Activated T-helper 1 cell treated with anti-CD3 and anti-CD28 coated beads, Interleukin-12 subunit alpha, Interleukin-12 subunit beta, Interleukin-2, Interleukin-4 antibody, amounts not matched to agents 30 ng/mL and 10 ng/mL and 1 ng/mL, durations not matched to agents 14 hours and 24 hours and 36 hours (primary cell): ENCODE measurements at regions of chr5 and their contacts with region 1.

Region 1: GRCh38 chr5:141512390-141512910 is 23.6 kb downstream of the PCDHGC5 start:
- DNase-seq: peak; percentile 74
- H3K4me3 Mint-ChIP-seq: peak overlapping the region; percentile 87
- H3K27ac Mint-ChIP-seq: peak overlapping the region; percentile 95
- H3K4me1 Mint-ChIP-seq: peaks cover 37% of the 10 kb centered on the region
- H3K27me3 Mint-ChIP-seq: no peaks in the 10 kb centered on the region

Region 2: DNA sequence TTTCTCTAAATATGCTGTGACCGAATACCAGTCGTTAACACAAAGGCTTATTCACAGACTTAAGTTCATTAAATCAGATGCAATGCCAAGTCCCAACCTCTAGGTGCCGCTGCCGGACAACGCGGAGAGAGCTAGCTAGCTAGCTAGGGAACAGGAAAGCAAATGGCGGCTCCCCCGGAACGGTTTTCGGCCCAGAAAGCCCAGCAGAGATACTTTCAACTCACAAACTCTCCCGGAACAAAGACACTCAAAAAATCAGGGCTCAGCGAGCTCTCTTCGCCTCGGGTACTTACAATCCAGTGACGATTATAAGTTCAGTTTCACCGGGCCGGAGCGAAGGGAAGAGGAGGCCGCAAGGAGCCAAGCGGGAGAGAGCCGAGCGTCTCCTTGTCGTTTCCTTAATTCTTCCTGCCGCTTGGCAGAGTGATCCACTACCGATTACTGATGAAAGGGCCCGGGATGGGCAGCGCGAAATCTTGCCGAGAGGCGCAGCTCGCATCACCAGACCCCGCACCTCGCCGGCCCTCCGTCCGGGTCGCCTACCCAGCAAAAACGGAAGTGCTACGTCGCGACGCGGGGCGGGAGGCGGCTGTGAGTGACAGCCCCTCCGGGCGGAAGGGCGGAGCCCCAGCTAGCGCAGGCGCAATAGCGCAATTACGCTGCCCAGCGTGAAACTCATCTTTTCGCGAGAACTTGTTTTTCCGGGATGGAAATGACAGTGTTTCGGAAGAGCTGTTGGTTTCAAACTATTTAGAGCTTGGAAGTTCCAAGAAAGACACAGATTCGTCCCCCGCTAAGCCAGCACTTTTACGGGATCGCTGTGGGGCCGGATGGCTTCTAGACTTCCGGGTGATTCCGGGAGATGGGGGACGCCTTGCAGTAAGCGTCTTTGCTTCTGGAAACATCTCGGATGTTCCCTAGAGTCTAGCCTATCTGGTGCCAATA is 192.0 kb before region 1 on chr5 and contains the start of gene TAF7:
- intact Hi-C with region 1: loop called (anchors 2 kb)
- DNase-seq: peak; percentile 91
- H3K4me3 Mint-ChIP-seq: peak within 1 kb of the TSS; percentile 94
- H3K27ac Mint-ChIP-seq: peak within 1 kb of the TSS; percentile 98
- H3K4me1 Mint-ChIP-seq: peaks cover 31% of the 10 kb centered on the region
- H3K27me3 Mint-ChIP-seq: no peaks in the 10 kb centered on the region
- total RNA-seq, gene TAF7: 71.6 and 73.7 TPM in 2 replicates

Region 3: DNA sequence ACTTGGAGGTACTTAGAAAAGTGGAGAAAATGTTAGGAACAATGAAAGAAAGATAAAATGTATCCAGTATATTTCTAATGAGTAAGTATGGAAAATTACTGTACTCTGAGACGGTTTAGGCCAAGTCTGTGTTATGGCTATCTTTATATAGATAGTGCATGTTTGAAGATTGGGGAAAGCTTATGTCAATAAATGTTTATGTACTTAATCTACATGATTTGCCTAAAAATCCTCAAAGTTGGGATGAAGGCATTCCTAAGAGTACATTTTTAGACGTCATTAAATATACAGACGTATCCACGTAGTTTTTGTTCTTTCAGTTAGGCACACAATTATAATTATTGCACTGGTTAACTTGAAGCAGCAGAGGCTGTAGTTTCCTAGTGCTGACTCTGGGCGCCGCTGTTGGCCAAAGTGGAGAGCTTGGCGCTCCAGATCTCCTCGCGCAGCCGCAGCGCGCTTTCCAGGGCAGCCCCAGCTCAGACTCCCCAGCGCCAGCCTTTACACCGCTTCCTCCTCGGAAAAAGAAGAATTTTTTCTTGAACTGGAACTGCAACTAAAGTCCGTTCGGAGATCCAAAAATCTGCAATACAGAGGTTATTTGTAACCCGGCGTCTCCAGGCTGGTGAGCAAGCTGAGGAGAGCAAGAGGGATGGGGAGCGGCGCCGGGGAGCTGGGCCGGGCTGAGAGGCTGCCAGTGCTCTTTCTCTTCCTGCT is 125.1 kb before region 1 on chr5 and contains the start of gene PCDHGB4:
- intact Hi-C with region 1: no loop called
- DNase-seq: no peak
- H3K4me3 Mint-ChIP-seq: peak within 1 kb of the TSS; percentile 39
- H3K27ac Mint-ChIP-seq: no peak within 1 kb of the TSS
- H3K4me1 Mint-ChIP-seq: no peaks in the 10 kb centered on the region
- H3K27me3 Mint-ChIP-seq: peaks cover 3% of the 10 kb centered on the region
- total RNA-seq, gene PCDHGB4: 0.18 and 0.27 TPM in 2 replicates

Region 4: GRCh38 chr5:141412854-141413539 is 99.5 kb before region 1 on chr5 and contains the start of gene PCDHGA10:
- intact Hi-C with region 1: loop called (anchors 1 kb)
- DNase-seq: peak; percentile 33
- H3K4me3 Mint-ChIP-seq: peak within 1 kb of the TSS; percentile 84
- H3K27ac Mint-ChIP-seq: peak within 1 kb of the TSS; percentile 68
- H3K4me1 Mint-ChIP-seq: peaks cover 13% of the 10 kb centered on the region
- H3K27me3 Mint-ChIP-seq: peaks cover 44% of the 10 kb centered on the region
- total RNA-seq, gene PCDHGA10: 0.10 and 0.13 TPM in 2 replicates

Region 5: GRCh38 chr5:141475625-141476131 is 36.8 kb before region 1 on chr5 and contains the start of gene PCDHGC3:
- intact Hi-C with region 1: loop called (anchors 1 kb)
- DNase-seq: peak; percentile 13
- H3K4me3 Mint-ChIP-seq: peak within 1 kb of the TSS; percentile 90
- H3K27ac Mint-ChIP-seq: no peak within 1 kb of the TSS
- H3K4me1 Mint-ChIP-seq: peaks cover 16% of the 10 kb centered on the region
- H3K27me3 Mint-ChIP-seq: peaks cover 53% of the 10 kb centered on the region
- total RNA-seq, gene PCDHGC3: 0.31 and 0.32 TPM in 2 replicates

Region 6: DNA sequence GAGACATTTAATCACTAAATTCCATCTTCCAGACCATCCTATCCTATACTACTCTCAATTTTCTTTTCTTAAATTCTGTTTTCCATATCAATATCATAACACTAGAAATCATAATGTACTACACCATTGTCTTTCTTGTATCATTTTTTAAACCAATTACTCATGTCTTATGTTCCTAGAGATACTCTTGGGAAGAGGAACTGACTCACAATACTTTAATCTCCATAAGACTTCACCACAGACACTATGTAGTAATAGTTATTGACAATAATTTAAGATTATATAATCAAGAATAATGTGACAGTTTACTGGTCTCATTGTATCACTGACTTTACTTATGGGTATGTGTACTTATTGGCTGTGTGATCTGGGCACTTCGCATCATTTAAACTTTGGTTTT is 20.3 kb after region 1 on chr5:
- intact Hi-C with region 1: no loop called
- DNase-seq: no peak
- H3K4me3 Mint-ChIP-seq: no peak overlapping the region
- H3K27ac Mint-ChIP-seq: no peak overlapping the region
- H3K4me1 Mint-ChIP-seq: no peaks in the 10 kb centered on the region
- H3K27me3 Mint-ChIP-seq: no peaks in the 10 kb centered on the region

Region 7: GRCh38 chr5:141564216-141564692 is 51.8 kb after region 1 on chr5:
- intact Hi-C with region 1: loop called (anchors 2 kb)
- DNase-seq: peak; percentile 65
- H3K4me3 Mint-ChIP-seq: peak overlapping the region; percentile 6
- H3K27ac Mint-ChIP-seq: peak overlapping the region; percentile 88
- H3K4me1 Mint-ChIP-seq: peaks cover 31% of the 10 kb centered on the region
- H3K27me3 Mint-ChIP-seq: no peaks in the 10 kb centered on the region

Region 8: DNA sequence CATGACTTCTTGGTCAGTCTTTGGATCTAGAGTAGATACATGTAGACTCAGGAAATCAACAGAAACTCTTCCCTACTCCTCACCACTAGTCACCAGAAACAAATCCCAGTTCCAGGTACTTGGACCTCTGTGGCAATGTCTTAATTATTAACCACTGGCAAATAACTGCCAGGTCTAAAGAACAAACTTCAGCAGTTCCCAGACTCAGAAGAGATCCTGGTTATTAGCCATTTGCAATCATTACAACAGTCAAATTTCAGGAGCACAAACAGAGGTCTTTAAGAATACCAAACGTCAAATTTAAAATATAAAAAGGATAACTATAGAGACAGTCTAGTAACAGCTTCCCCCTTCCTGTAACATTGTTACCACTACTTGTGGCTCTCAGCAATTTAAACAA is 96.1 kb after region 1 on chr5:
- intact Hi-C with region 1: no loop called
- DNase-seq: no peak
- H3K4me3 Mint-ChIP-seq: peak overlapping the region; percentile 43
- H3K27ac Mint-ChIP-seq: peak overlapping the region; percentile 79
- H3K4me1 Mint-ChIP-seq: peaks cover 85% of the 10 kb centered on the region
- H3K27me3 Mint-ChIP-seq: no peaks in the 10 kb centered on the region